OCI-LY7 (cell line): ENCODE measurements at regions of chrX and their contacts with region 1.

Region 1: GRCh38 chrX:16702700-16703599 is 9.5 kb downstream of the CTPS2 start:
- DNase-seq: no peak
- H3K4me3 ChIP-seq: no peak overlapping the region
- H3K27ac ChIP-seq: no peak overlapping the region
- H3K4me1 ChIP-seq: peaks cover 24% of the 10 kb centered on the region
- CTCF ChIP-seq: no peak

Region 2: DNA sequence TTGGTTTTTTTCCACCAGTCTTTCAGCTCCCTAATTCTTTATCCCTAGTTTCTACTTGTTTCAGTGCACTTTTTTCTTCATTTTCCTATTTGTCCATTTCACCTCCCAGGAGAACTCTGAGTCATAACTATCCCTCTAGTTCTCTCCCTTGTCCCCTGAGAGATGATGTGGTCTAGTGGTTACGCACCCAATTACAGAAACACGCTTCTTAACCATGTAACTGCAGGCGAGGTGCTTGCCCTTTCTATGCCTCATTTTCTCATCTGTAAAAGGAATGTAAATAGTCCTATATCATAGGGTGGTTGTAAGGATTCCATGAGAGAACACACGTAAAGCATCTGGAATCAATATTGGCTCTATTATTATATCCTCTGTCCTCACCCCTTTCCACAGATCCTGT is 588.3 kb before region 1 on chrX:
- CTCF ChIA-PET with region 1: no interaction called
- POLR2A ChIA-PET with region 1: no interaction called
- intact Hi-C with region 1: loop called (anchors 5 kb)
- DNase-seq: no peak
- H3K4me3 ChIP-seq: peak overlapping the region; percentile 34
- H3K27ac ChIP-seq: peak overlapping the region; percentile 37
- H3K4me1 ChIP-seq: peaks cover 51% of the 10 kb centered on the region
- CTCF ChIP-seq: no peak

Region 3: DNA sequence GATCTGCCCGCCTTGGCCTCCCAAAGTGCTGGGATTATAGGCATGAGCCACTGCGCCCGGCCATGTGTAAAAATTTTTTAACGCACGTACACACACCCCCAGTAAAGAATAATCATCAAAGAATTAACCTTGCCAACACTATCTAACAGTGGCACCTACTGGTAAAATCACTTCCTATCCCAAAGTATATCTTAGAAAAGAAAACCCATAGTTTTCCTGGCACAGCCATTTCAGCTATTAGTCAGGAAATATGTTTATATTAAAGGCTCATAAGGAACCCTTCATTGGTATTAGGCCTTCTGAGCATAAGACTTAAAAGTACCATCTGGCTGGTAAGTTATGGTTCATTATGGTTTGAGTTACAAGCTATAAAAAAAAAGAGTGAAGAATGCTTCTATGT is 38.9 kb before region 1 on chrX:
- CTCF ChIA-PET with region 1: no interaction called
- POLR2A ChIA-PET with region 1: no interaction called
- intact Hi-C with region 1: no loop called
- DNase-seq: no peak
- H3K4me3 ChIP-seq: no peak overlapping the region
- H3K27ac ChIP-seq: no peak overlapping the region
- H3K4me1 ChIP-seq: no peaks in the 10 kb centered on the region
- CTCF ChIP-seq: no peak

Region 4: DNA sequence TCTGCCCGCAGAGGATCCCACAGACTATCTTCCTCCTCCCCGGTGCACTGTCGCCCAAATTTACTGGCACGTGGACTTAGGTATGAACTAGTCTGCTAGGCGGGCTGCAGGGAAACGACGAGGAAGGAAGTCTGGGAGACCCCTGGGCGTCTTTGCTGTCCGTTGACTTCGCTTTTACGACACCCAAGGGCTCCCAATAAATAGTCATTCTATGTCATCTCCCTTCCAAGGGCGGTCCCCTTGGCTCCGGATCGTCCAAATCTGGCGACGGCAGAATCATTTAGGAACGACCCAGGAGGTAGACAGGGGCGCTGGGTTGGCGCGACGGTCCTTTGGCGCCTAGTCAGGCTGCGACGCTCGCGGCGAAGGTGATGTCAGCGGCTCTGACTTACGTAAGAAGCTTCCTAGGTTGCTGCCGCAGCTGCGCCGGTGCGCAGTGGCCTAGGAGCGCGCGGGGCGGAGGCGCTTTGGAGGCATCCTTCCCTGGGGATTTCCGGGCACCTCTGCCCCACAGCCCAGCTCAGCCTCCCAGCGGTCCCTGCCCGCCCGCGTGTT is 674.2 kb after region 1 on chrX:
- CTCF ChIA-PET with region 1: no interaction called
- POLR2A ChIA-PET with region 1: no interaction called
- intact Hi-C with region 1: no loop called
- DNase-seq: no peak
- H3K4me3 ChIP-seq: no peak overlapping the region
- H3K27ac ChIP-seq: no peak overlapping the region
- H3K4me1 ChIP-seq: no peaks in the 10 kb centered on the region
- CTCF ChIP-seq: no peak